Activated CD4-positive, alpha-beta memory T cell treated with anti-CD3 and anti-CD28 coated beads for 36 hours (primary cell): ENCODE measurements at regions of chr18 and their contacts with region 1.

Region 1: GRCh38 chr18:2641638-2642037 is 13.9 kb upstream of the SMCHD1 start:
- DNase-seq: no peak
- H3K4me3 Mint-ChIP-seq: peak overlapping the region; percentile 57
- H3K27ac Mint-ChIP-seq: peak overlapping the region; percentile 58
- H3K4me1 Mint-ChIP-seq: peaks cover 52% of the 10 kb centered on the region
- H3K27me3 Mint-ChIP-seq: no peaks in the 10 kb centered on the region

Region 2: DNA sequence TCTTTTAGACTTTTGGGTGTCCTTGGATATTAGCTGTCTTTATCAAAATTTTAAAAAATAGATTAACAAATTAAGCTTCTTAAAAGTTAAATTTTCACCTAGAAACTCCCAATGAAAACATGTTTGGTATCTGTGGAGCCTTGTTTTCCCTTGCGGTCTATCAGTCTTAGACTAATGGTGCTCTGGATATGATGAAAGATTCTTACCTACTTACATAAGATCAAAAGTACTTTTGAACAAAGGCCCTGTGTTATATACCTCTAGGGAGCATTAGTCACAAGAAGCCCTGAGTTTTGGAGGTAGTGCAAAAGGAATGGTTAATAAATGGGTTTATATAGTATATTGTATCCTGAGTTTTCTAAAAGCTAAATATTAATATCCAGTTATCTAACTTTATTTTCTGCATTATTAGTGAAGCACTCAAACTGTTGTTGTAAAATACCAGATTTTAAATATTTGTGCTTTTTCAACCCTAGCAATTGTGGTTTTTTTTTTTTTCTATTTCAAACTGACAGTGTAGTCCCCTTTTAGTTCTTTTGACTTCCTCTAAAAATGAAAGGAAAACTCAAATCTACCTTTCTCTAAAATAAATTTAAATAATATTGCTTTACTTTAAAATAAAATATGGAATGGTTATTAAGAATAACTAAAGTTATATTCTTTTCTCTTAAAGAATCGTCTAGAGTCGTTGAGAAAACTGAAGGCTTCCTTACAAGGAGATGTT is 52.1 kb before region 1 on chr18:
- CTCF ChIA-PET with region 1: interaction called, 5 read pairs
- POLR2A ChIA-PET with region 1: no interaction called
- intact Hi-C with region 1: loop called (anchors 5 kb)
- DNase-seq: no peak
- H3K4me3 Mint-ChIP-seq: peak overlapping the region; percentile 7
- H3K27ac Mint-ChIP-seq: peak overlapping the region; percentile 81
- H3K4me1 Mint-ChIP-seq: peaks cover 37% of the 10 kb centered on the region
- H3K27me3 Mint-ChIP-seq: no peaks in the 10 kb centered on the region

Region 3: GRCh38 chr18:2606335-2606734 is 35.3 kb before region 1 on chr18:
- CTCF ChIA-PET with region 1: interaction called, 4 read pairs
- POLR2A ChIA-PET with region 1: no interaction called
- intact Hi-C with region 1: loop called (anchors 1 kb)
- DNase-seq: no peak
- H3K4me3 Mint-ChIP-seq: peak overlapping the region; percentile 33
- H3K27ac Mint-ChIP-seq: peak overlapping the region; percentile 82
- H3K4me1 Mint-ChIP-seq: peaks cover 40% of the 10 kb centered on the region
- H3K27me3 Mint-ChIP-seq: no peaks in the 10 kb centered on the region

Region 4: DNA sequence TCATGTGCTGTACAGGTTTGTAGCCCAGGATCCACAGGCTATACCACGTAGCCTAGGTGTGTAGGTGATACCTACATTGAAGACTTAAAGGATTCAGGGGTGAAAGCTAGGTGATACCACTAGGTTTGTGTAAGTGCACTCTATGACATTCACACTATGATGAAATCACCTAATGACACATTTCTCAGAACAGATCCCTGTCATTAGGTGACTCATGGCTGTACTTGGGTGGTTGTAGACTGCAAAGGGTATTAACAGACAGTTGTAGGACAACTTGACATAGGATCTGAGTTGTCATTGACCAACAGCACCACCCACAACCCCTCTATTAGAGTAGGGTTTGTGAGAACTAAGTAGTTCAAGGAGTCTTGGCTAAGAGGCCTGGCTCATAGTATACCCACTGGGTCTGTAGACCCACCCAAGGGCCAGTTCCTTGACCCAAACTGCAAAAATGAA is 13.8 kb before region 1 on chr18:
- CTCF ChIA-PET with region 1: interaction called, 4 read pairs
- POLR2A ChIA-PET with region 1: interaction called, 6 read pairs
- intact Hi-C with region 1: loop called (anchors 1 kb)
- DNase-seq: peak; percentile 50
- H3K4me3 Mint-ChIP-seq: no peak overlapping the region
- H3K27ac Mint-ChIP-seq: peak overlapping the region; percentile 42
- H3K4me1 Mint-ChIP-seq: peaks cover 24% of the 10 kb centered on the region
- H3K27me3 Mint-ChIP-seq: no peaks in the 10 kb centered on the region

Region 5: GRCh38 chr18:2681993-2682603 is 40.5 kb after region 1 on chr18:
- CTCF ChIA-PET with region 1: no interaction called
- POLR2A ChIA-PET with region 1: no interaction called
- intact Hi-C with region 1: loop called (anchors 1 kb)
- DNase-seq: no peak
- H3K4me3 Mint-ChIP-seq: peak overlapping the region; percentile 20
- H3K27ac Mint-ChIP-seq: peak overlapping the region; percentile 90
- H3K4me1 Mint-ChIP-seq: peaks cover 67% of the 10 kb centered on the region
- H3K27me3 Mint-ChIP-seq: no peaks in the 10 kb centered on the region

Region 6: GRCh38 chr18:2871111-2871720 is 229.6 kb after region 1 on chr18:
- CTCF ChIA-PET with region 1: no interaction called
- POLR2A ChIA-PET with region 1: no interaction called
- intact Hi-C with region 1: no loop called
- DNase-seq: no peak
- H3K4me3 Mint-ChIP-seq: no peak overlapping the region
- H3K27ac Mint-ChIP-seq: no peak overlapping the region
- H3K4me1 Mint-ChIP-seq: no peaks in the 10 kb centered on the region
- H3K27me3 Mint-ChIP-seq: no peaks in the 10 kb centered on the region

Region 7: DNA sequence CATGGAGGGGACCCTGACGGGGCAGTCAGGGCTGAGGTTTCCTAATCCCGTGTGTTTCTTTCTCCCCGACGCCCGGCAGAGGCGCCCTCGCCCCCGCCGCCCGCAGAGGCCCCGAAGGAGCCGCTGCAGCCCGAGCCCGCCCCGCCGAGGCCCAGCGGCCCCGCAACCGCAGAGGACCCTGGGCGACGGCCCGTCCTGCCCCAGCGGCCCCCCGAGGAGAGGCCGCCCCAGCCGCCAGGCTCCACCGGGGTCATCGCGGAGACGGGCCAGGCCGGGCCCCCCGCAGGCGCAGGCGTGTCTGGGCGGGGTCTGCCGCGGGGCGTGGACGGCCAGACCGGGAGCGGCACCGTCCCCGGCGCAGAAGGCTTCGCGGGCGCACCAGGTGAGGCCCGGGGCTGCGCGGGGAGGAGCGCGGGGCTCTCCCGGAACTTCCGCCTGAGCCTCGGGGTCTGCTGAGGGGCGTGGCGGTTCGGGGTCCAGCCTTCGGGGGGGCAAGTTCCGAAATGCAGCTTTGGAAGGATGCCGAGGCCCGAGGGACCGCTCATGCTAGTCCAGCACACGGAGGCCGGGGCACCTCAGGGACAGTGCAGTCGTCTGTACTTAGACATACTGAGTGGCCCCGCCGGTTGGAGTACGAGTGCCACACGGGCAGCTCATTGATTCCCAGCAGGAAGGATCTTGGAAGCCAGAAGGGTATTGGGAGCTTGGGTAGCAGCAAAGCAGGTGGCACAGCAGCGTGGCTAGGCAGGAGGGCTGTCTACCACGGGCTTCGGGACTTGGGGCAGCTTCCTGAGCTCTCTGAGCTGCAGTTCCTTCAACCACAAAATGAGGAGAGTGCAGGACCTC is 265.3 kb after region 1 on chr18:
- CTCF ChIA-PET with region 1: no interaction called
- POLR2A ChIA-PET with region 1: no interaction called
- intact Hi-C with region 1: no loop called
- DNase-seq: peak; percentile 56
- H3K4me3 Mint-ChIP-seq: peak overlapping the region; percentile 83
- H3K27ac Mint-ChIP-seq: peak overlapping the region; percentile 60
- H3K4me1 Mint-ChIP-seq: peaks cover 13% of the 10 kb centered on the region
- H3K27me3 Mint-ChIP-seq: no peaks in the 10 kb centered on the region